HCT116 (cell line): ENCODE measurements at regions of chr17 and their contacts with region 1.

Region 1: GRCh38 chr17:76132574-76133338 is 8.3 kb downstream of the FOXJ1 start:
- DNase-seq: peak; percentile 40
- ATAC-seq: peak; percentile 89
- H3K4me3 ChIP-seq: peak overlapping the region; percentile 31 to 54
- H3K27ac ChIP-seq: peak overlapping the region; percentile 59
- H3K4me1 ChIP-seq: peaks cover 24 to 26% of the 10 kb centered on the region in 2 experiments
- H3K27me3 ChIP-seq: no peaks in the 10 kb centered on the region
- CTCF ChIP-seq: peak in 2 of 3 experiments; percentile 21 to 35; a peak in 2 of 6 replicates
- POLR2A ChIP-seq: no peak
- RAD21 ChIP-seq: no peak

Region 2: DNA sequence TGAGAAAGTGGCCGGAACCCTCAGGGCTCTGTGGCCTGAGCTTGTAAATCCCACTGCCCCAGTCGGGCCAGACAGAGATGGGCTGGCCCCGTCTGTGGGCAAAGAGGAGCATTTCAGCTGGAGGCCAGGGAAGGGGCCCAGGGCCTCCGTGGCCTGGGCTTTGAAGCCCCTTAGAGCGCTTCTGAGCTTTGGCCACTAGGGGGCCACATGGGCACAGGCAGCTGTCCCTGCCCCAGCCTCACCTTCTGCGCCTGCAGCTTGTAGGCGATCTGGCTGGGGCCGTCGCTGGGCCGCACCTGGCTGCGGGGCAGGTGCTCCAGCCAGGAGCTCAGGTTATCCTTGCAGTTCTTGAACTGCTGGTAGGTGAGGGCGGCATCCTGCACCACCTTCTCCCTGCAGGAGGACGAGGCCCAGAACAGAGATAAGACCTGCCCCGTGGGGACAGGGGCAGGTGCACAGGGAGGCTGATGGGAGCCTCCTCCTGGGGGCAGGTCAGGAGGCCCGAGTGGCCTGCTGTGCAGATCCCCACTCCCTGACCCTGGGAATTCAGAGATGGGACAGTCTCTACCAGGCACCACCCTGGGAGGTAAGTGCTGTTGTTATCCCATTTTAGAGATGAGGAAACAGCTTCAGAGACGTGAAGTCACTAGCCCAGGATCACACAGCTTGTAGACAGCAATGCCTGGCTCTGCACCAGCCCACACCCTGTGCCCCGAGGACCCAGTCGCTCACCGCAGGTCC is 118.4 kb before region 1 on chr17:
- CTCF ChIA-PET with region 1: no interaction called
- POLR2A ChIA-PET with region 1: no interaction called
- RAD21 ChIA-PET with region 1: no interaction called
- intact Hi-C with region 1: no loop called
- DNase-seq: peak; percentile 46
- ATAC-seq: peak; percentile 94
- H3K4me3 ChIP-seq: no peak overlapping the region
- H3K27ac ChIP-seq: peak overlapping the region; percentile 12; the same call in 1 of the 2 replicates
- H3K4me1 ChIP-seq: peaks cover 0 to 3% of the 10 kb centered on the region in 2 experiments; a peak in 1 of 4 replicates
- H3K27me3 ChIP-seq: no peaks in the 10 kb centered on the region
- CTCF ChIP-seq: peak; percentile 92 to 99 (median 98)
- POLR2A ChIP-seq: no peak
- RAD21 ChIP-seq: peak; percentile 98

Region 3: DNA sequence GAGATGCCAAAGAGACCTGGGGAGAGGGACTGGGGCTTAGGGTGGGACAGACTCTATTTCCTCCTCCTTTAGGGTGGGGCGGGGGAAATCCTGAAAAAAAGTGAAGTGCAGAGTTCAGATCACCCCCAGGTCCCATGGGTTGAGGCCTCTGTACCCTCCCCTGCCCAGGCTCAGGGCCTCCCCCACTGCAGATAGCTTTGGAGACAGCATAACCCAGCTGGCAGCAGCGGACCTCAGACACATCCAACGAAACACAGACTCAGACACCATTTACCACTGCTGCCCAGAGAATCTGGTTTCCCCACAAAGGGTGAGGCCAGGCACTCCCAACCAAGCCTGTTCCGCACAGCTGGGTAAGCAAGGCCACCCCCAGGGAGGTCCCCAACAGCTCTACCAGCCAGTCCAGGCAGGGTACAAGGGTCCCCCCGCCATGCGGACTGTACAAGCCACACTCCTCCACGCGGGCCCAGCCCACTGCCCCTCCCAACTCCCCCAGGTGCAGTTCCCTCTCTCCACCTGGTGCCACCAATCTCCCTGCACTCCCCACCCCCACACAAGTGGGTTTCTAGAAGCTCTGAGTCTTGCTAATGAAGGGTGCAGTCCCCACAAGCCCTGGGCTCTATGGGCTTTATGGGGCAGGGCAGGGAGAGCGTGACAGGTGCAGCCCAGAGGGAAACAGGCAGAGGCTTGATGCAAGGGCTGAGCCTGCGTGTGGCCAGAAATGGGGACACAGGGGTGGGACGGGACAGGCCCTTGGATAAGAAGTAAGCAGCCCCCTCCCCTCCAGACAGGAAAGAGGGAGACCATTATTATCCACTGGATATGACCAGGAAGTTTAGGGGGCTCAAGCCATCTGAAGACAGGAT is 359.6 kb after region 1 on chr17:
- CTCF ChIA-PET with region 1: no interaction called
- POLR2A ChIA-PET with region 1: no interaction called
- RAD21 ChIA-PET with region 1: interaction called in 1 of 2 experiments, 10 read pairs
- intact Hi-C with region 1: no loop called
- DNase-seq: no peak
- ATAC-seq: peak; percentile 13; the same call in 1 of the 2 replicates
- H3K4me3 ChIP-seq: no peak overlapping the region
- H3K27ac ChIP-seq: no peak overlapping the region
- H3K4me1 ChIP-seq: peaks cover 4 to 41% of the 10 kb centered on the region in 2 experiments; a peak in 2 of 4 replicates
- H3K27me3 ChIP-seq: no peaks in the 10 kb centered on the region
- CTCF ChIP-seq: no peak
- POLR2A ChIP-seq: no peak
- RAD21 ChIP-seq: no peak